A549 (cell line): ENCODE measurements at regions of chr1 and their contacts with region 1.

Region 1: GRCh38 chr1:67214420-67215174 is 48.3 kb downstream of the IL23R start:
- DNase-seq: peak in 1 of 2 experiments; percentile 24
- ATAC-seq: peak in 1 of 2 experiments; percentile 75; a peak in 3 of 6 replicates
- H3K4me3 ChIP-seq: no peak overlapping the region
- H3K27ac ChIP-seq: no peak overlapping the region
- H3K4me1 ChIP-seq: no peaks in the 10 kb centered on the region
- CTCF ChIP-seq: peak; percentile 48
- EP300 ChIP-seq: no peak
- POLR2A ChIP-seq: no peak
- RAD21 ChIP-seq: 0 out of 5 replicates have a peak, but pooled peaks of 1 of the 2 experiments have one; percentile 15

Region 2: GRCh38 chr1:66996018-66996682 is 218.4 kb before region 1 on chr1:
- CTCF ChIA-PET with region 1: interaction called, 30 read pairs
- POLR2A ChIA-PET with region 1: no interaction called
- DNase-seq: peak; percentile 16 to 69
- ATAC-seq: peak; percentile 71 to 89
- H3K4me3 ChIP-seq: no peak overlapping the region
- H3K27ac ChIP-seq: no peak overlapping the region
- H3K4me1 ChIP-seq: no peaks in the 10 kb centered on the region
- CTCF ChIP-seq: peak; percentile 78
- EP300 ChIP-seq: no peak
- POLR2A ChIP-seq: no peak
- RAD21 ChIP-seq: peak; percentile 76 to 83

Region 3: DNA sequence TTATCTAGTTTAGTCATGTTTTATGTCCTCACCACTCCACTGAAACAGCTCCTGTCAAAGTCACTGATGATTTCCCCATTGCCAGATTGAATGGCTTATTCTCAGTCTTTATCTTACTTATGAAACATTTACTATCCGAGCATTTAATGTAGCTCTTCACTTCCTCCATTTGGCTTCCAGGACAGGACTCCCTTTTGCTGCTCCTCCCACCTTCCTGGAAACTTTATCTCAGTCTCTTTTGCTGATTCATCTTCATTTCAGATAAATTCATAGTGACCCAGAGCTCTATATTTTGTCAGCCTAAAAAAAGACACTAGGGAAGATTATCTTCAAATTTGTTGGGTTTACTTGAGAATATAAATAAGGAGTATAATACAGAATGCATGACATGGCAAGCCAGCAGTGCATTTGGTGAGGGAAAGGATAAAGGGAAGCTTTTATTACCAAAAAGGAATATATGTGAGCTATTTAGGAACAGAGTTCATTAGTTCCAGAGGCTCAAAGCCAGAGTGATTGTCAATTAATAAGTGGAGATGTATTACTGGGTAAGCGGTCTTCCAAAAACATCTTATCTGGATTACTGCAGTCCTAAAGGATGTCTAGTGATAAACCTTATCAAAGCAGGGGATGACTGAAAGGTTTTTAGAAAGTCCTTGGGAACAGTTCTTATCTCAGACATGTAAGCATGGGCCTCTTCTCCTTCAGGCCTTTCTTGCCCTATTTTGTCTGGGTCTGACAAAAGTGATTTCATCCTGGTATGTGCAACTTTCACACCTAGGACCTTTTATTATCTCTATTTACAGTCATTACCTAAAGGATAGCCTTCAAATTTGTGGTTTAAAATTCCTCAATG is 22.7 kb before region 1 on chr1:
- CTCF ChIA-PET with region 1: interaction called, 14 read pairs
- POLR2A ChIA-PET with region 1: no interaction called
- DNase-seq: no peak
- ATAC-seq: no peak
- H3K4me3 ChIP-seq: no peak overlapping the region
- H3K27ac ChIP-seq: no peak overlapping the region
- H3K4me1 ChIP-seq: peaks cover 12% of the 10 kb centered on the region; the same call in 2 of the 3 replicates
- CTCF ChIP-seq: no peak
- EP300 ChIP-seq: no peak
- POLR2A ChIP-seq: no peak
- RAD21 ChIP-seq: no peak

Region 4: DNA sequence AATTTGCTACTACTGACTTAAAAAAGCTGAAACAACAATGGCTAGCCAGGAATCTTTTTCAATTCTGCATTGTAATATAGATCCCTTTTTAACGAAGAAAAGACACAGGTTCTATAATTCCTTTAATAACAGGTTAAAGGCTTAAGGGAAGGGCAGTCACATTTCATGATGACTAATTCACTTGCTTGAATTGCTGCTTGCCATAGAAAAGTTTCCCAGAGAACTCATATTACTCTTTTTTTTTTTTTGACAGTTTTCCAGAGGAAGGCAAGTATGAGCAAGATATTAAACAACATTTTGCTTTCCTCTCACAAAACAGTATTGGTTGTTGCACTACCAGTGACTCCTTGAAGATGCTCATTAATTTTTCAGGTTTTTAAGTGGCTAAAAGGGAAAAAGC is 12.6 kb after region 1 on chr1:
- CTCF ChIA-PET with region 1: interaction called, 36 read pairs
- POLR2A ChIA-PET with region 1: no interaction called
- DNase-seq: no peak
- ATAC-seq: no peak
- H3K4me3 ChIP-seq: no peak overlapping the region
- H3K27ac ChIP-seq: no peak overlapping the region
- H3K4me1 ChIP-seq: no peaks in the 10 kb centered on the region
- CTCF ChIP-seq: no peak
- EP300 ChIP-seq: no peak
- POLR2A ChIP-seq: no peak
- RAD21 ChIP-seq: no peak

Region 5: DNA sequence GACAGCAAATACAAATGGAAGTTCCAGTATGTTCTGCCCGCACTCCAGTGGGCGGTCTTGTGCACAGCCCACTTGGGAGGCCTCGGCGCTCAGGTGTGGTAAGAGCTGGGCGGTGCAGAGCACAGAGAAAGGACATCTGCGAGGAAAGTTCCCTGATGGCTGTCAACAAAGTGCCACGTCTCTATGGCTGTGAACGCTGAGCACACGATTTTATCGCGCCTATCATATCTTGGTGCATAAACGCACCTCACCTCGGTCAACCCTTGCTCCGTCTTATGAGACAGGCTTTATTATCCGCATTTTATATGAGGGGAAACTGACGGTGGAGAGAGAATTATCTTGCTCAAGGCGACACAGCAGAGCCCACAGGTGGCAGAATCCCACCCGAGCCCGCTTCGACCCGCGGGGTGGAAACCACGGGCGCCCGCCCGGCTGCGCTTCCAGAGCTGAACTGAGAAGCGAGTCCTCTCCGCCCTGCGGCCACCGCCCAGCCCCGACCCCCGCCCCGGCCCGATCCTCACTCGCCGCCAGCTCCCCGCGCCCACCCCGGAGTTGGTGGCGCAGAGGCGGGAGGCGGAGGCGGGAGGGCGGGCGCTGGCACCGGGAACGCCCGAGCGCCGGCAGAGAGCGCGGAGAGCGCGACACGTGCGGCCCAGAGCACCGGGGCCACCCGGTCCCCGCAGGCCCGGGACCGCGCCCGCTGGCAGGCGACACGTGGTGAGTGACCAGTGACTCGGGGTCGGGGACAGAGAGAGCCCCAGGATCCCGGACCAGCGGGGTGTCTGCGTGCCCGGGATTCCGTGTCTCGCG is 92.9 kb after region 1 on chr1 and contains the start of gene IL12RB2:
- CTCF ChIA-PET with region 1: no interaction called
- POLR2A ChIA-PET with region 1: no interaction called
- DNase-seq: no peak
- ATAC-seq: peak; percentile 43 to 64; a peak in 4 of 6 replicates
- H3K4me3 ChIP-seq: peak within 1 kb of the TSS; percentile 45
- H3K27ac ChIP-seq: peak within 1 kb of the TSS in 1 of 2 experiments; percentile 70; a peak in 3 of 6 replicates
- H3K4me1 ChIP-seq: no peaks in the 10 kb centered on the region
- CTCF ChIP-seq: no peak
- EP300 ChIP-seq: no peak
- POLR2A ChIP-seq: no peak
- RAD21 ChIP-seq: no peak
- polyA plus RNA-seq, gene IL12RB2: not detected in 2 replicates